Gastrocnemius medialis (tissue), 4 donors: ENCODE measurements at regions of chr9 and their contacts with region 1.

Region 1: GRCh38 chr9:98944734-98945074 is 997 bp downstream of the COL15A1 start:
- DNase-seq: no peak
- ATAC-seq: peak in 1 of 2 donors; percentile 63
- H3K4me3 ChIP-seq: peak overlapping the region; percentile 58 to 74 (median 60)
- H3K27ac ChIP-seq: peak overlapping the region; percentile 67 to 77 (median 70)
- H3K4me1 ChIP-seq: peaks cover 12 to 13% of the 10 kb centered on the region in 2 donors
- H3K27me3 ChIP-seq: peaks cover 24 to 42% (median 36%) of the 10 kb centered on the region in 3 donors
- CTCF ChIP-seq: no peak
- POLR2A ChIP-seq: no peak

Region 2: DNA sequence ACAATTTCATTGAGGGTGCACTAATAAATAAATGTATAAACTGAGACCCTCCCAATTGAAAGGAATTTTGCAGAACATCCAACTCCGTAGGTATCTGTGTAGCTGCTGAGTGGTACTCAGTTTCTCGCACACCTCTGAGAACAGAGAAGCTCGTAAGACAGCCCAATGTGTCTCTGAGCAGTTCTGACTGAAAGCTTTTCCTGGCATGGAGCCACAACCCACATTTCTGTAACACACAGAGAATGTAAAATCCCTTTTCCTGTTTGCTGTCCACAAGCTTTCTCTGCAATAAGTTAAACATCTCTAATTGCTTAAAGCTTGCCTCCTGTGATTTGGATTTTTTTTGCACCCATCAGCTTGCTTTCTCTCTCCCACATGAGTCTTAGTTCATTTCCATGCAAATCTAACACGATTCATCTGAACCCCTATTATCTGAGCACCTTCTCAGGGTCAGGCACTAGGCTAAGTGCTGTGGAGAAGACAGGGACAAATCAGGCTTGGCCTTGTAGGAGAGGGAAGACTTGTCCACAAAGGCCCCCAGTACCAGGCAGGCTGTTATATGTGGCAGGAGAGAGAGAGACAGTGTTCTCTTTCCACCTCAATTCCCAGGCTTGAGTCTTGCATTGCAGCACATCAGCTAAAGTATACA is 45.2 kb before region 1 on chr9:
- in situ Hi-C with region 1: loop called in 1 of 4 experiments (anchors 5 kb)
- intact Hi-C with region 1: no loop called
- DNase-seq: no peak
- ATAC-seq: no peak
- H3K4me3 ChIP-seq: no peak overlapping the region
- H3K27ac ChIP-seq: no peak overlapping the region
- H3K4me1 ChIP-seq: peaks cover 0 to 3% of the 10 kb centered on the region in 2 donors
- H3K27me3 ChIP-seq: no peaks in the 10 kb centered on the region
- CTCF ChIP-seq: no peak
- POLR2A ChIP-seq: no peak